Activated B cell treated with CpG ODN at 0.5 μM for 24 hours (primary cell): ENCODE measurements at regions of chr7 and their contacts with region 1.

Region 1: DNA sequence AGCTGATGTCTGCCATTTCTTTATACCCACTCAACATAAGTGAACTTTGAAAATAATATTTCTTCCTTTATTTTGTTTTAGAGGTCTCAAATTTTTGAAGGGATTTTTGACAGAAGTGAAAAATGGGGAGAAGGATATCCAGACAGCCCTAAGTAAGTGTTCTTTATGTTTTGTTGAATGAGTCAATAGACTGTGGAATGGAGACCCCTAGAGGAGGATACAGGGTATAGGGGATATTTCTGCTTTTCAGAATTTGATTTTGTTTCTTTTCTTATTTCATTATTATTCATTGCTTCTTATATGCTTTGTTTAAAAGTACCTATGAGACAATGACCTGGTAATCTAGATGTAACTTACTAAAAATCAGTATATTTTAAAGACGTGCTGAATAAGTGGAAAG is 34.4 kb downstream of the PLEKHA8 start:
- DNase-seq: no peak
- ATAC-seq: peak; percentile 87
- H3K4me3 Mint-ChIP-seq: no peak overlapping the region
- H3K27ac Mint-ChIP-seq: peak overlapping the region; percentile 50
- H3K4me1 Mint-ChIP-seq: peaks cover 20% of the 10 kb centered on the region
- H3K27me3 Mint-ChIP-seq: no peaks in the 10 kb centered on the region
- CTCF ChIP-seq: peak; percentile 42

Region 2: GRCh38 chr7:29748286-29749108 is 314.1 kb before region 1 on chr7:
- CTCF ChIA-PET with region 1: interaction called, 6 read pairs
- POLR2A ChIA-PET with region 1: no interaction called
- intact Hi-C with region 1: loop called (anchors 1 kb)
- DNase-seq: no peak
- ATAC-seq: no peak
- H3K4me3 Mint-ChIP-seq: no peak overlapping the region
- H3K27ac Mint-ChIP-seq: no peak overlapping the region
- H3K4me1 Mint-ChIP-seq: no peaks in the 10 kb centered on the region
- H3K27me3 Mint-ChIP-seq: peaks cover 6% of the 10 kb centered on the region
- CTCF ChIP-seq: no peak

Region 3: DNA sequence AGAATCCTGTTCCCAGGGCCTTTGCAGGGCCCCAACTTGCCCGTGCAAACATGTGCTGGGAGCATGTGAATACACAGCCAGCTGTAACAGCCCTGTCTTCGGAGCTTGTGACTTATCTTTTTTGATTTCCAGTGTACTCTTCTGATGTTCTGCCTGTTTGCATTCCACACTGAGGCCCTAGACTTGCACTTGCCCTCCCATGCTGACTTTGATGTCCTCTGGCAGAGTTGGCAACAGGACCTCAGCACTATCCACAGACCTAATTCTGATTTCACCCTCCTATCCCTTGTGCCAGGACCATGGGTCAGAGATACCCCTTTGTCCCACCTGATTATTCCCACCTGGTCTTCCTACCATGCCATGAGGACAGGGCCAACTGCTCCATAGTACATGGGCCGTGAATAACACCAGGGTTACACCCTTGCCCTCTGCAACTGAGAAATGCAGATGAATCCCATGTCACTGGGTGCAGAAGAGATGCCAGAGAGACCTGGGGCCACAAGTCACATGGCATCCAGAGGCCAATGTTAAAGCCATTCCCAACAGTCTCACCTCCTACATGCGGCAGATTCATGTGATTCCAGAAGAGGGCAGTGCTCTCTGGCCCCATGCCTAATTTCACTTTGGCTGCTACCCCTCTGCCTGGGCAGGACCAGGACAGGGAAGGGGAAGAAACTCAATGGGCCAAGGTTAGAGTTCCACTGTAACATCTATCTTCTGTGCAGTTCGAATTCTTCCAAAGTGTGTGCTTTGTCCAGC is 116.0 kb before region 1 on chr7:
- CTCF ChIA-PET with region 1: interaction called, 9 read pairs
- POLR2A ChIA-PET with region 1: no interaction called
- intact Hi-C with region 1: loop called (anchors 1 kb)
- DNase-seq: no peak
- ATAC-seq: no peak
- H3K4me3 Mint-ChIP-seq: no peak overlapping the region
- H3K27ac Mint-ChIP-seq: no peak overlapping the region
- H3K4me1 Mint-ChIP-seq: no peaks in the 10 kb centered on the region
- H3K27me3 Mint-ChIP-seq: no peaks in the 10 kb centered on the region
- CTCF ChIP-seq: no peak

Region 4: GRCh38 chr7:30019387-30019786 is 43.2 kb before region 1 on chr7:
- CTCF ChIA-PET with region 1: no interaction called
- POLR2A ChIA-PET with region 1: no interaction called
- intact Hi-C with region 1: loop called (anchors 1 kb)
- DNase-seq: no peak
- ATAC-seq: no peak
- H3K4me3 Mint-ChIP-seq: no peak overlapping the region
- H3K27ac Mint-ChIP-seq: no peak overlapping the region
- H3K4me1 Mint-ChIP-seq: peaks cover 17% of the 10 kb centered on the region
- H3K27me3 Mint-ChIP-seq: no peaks in the 10 kb centered on the region
- CTCF ChIP-seq: no peak

Region 5: DNA sequence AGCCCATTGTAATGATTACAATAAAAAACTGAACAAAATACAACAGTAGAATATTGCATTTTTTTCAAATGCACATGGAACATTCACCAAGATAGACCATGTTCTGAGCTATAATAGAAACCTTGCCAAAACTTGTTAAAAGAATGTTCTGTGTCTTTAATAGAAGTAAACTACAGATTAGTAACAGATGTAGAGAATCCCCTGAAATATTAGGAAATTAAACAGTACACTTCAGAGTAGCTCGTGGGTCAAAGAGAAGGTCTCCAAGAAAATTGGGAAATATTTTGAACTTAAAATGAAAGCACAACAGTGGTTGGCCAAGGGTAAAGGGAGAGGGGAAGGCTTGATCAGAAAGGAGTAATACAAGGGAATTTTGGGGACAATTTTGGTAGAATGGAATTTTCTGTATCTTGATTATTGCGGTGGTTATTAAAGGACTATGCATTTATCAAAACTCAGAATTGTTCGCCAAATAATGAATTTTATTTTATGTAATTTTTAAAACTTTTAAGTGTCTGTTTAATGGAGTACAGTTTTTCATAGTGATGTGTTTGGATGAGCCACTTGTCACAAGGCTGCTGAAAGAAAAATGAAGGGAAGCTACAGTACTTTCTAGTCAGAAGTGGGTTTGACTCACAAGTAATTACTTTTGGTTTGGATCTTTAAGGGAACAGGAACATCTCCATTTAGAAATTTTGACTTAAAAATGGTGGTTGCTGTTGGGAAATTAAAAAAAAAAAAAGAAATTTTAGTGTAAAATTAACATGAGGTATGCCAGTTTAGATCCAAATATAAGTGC is 24.2 kb before region 1 on chr7:
- CTCF ChIA-PET with region 1: no interaction called
- POLR2A ChIA-PET with region 1: no interaction called
- intact Hi-C with region 1: no loop called
- DNase-seq: no peak
- ATAC-seq: no peak
- H3K4me3 Mint-ChIP-seq: no peak overlapping the region
- H3K27ac Mint-ChIP-seq: no peak overlapping the region
- H3K4me1 Mint-ChIP-seq: no peaks in the 10 kb centered on the region
- H3K27me3 Mint-ChIP-seq: no peaks in the 10 kb centered on the region
- CTCF ChIP-seq: no peak

Region 6: GRCh38 chr7:30074422-30075030 is 11.9 kb after region 1 on chr7:
- CTCF ChIA-PET with region 1: interaction called, 10 read pairs
- POLR2A ChIA-PET with region 1: no interaction called
- intact Hi-C with region 1: no loop called
- DNase-seq: no peak
- ATAC-seq: no peak
- H3K4me3 Mint-ChIP-seq: no peak overlapping the region
- H3K27ac Mint-ChIP-seq: no peak overlapping the region
- H3K4me1 Mint-ChIP-seq: peaks cover 1% of the 10 kb centered on the region
- H3K27me3 Mint-ChIP-seq: no peaks in the 10 kb centered on the region
- CTCF ChIP-seq: no peak

Region 7: DNA sequence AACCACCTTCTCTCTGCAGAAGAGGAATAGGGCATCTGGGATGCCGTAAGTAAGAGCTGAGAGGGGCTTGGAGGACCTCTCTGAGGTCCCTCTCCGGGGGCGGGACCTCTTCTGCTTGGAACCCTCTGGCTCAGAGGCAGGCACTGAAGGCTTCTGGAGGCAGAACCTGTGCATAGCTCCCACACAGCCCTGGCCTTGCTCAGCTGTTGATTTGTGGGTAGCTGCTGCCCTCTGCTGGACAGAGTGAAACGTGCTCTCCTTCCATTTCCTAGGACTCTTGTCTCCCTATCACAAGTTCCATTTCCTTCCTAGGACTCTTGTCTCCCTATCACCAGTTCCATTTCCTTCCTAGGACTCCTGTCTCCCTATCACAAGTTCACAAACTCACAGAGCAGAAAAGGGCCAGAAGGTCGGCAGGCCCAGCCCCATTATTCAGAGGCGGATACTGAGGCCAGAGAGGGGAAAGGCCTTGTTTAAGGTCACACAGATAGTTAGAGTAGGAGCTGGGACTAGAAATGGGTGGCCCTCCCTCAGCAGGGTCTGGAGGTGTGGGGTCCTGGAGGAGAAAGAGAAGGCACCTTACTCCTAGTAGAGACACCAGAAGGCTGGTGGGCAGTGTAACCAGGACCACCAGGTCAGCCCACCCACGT is 501.8 kb after region 1 on chr7:
- CTCF ChIA-PET with region 1: interaction called, 22 read pairs
- POLR2A ChIA-PET with region 1: no interaction called
- intact Hi-C with region 1: loop called (anchors 1 kb)
- DNase-seq: peak; percentile 65
- ATAC-seq: peak; percentile 97
- H3K4me3 Mint-ChIP-seq: no peak overlapping the region
- H3K27ac Mint-ChIP-seq: no peak overlapping the region
- H3K4me1 Mint-ChIP-seq: no peaks in the 10 kb centered on the region
- H3K27me3 Mint-ChIP-seq: no peaks in the 10 kb centered on the region
- CTCF ChIP-seq: peak; percentile 38